ENCODE measurements at regions of chr10 and their contacts with region 1.

Region 1: GRCh38 chr10:84537447-84537931 is 209.1 kb downstream of the CCSER2 start:
- DNase-seq: peak; percentile 45
- H3K4me3 ChIP-seq: no peak overlapping the region
- H3K27ac ChIP-seq: no peak overlapping the region
- H3K4me1 ChIP-seq: peaks cover 5% of the 10 kb centered on the region
- H3K27me3 ChIP-seq: peaks cover 6% of the 10 kb centered on the region
- CTCF ChIP-seq: peak; percentile 65

Region 2: GRCh38 chr10:84375011-84375410 is 162.5 kb before region 1 on chr10:
- intact Hi-C with region 1: loop called (anchors 2 kb)
- DNase-seq: peak; percentile 57
- H3K4me3 ChIP-seq: no peak overlapping the region
- H3K27ac ChIP-seq: no peak overlapping the region
- H3K4me1 ChIP-seq: no peaks in the 10 kb centered on the region
- H3K27me3 ChIP-seq: no peaks in the 10 kb centered on the region
- CTCF ChIP-seq: peak; percentile 59

Region 3: DNA sequence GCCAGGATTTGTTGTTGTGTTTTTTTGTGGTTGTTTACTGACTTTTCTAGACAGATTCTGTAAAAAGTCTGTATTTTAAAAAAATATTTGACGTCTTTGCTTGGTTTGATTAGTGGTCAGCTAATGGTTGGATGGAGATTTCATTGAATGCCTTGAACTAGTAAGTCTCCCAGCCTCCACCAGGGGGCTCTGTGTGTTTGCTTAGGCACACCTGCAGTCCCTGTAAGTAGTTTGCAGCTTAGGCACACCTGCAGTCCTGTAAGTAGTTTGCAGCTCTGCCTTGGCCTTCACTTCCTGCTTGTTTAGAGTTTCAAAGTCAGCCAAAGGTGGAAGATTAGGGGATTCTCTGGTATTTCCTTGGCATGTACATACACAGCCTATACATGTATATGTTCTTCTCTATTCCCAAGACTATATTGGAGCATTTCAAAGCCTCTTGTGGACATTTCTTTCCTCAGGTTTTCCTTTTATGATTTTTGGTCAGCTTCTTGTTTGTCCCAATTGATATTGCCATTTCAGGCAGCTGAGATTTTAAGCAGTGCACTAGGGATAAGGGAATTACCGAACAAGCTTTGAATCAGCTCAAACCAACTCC is 107.5 kb before region 1 on chr10:
- intact Hi-C with region 1: loop called (anchors 5 kb)
- DNase-seq: peak; percentile 84
- H3K4me3 ChIP-seq: no peak overlapping the region
- H3K27ac ChIP-seq: no peak overlapping the region
- H3K4me1 ChIP-seq: peaks cover 9% of the 10 kb centered on the region
- H3K27me3 ChIP-seq: no peaks in the 10 kb centered on the region
- CTCF ChIP-seq: peak; percentile 77

Region 4: GRCh38 chr10:84762754-84763394 is 225.4 kb after region 1 on chr10:
- intact Hi-C with region 1: no loop called
- DNase-seq: no peak
- H3K4me3 ChIP-seq: no peak overlapping the region
- H3K27ac ChIP-seq: no peak overlapping the region
- H3K4me1 ChIP-seq: no peaks in the 10 kb centered on the region
- H3K27me3 ChIP-seq: no peaks in the 10 kb centered on the region
- CTCF ChIP-seq: no peak